ENCODE measurements at regions of chr5 and their contacts with region 1.

Region 1: GRCh38 chr5:68315679-68316271 is 100.2 kb downstream of the PIK3R1 start:
- DNase-seq: no peak

Region 2: DNA sequence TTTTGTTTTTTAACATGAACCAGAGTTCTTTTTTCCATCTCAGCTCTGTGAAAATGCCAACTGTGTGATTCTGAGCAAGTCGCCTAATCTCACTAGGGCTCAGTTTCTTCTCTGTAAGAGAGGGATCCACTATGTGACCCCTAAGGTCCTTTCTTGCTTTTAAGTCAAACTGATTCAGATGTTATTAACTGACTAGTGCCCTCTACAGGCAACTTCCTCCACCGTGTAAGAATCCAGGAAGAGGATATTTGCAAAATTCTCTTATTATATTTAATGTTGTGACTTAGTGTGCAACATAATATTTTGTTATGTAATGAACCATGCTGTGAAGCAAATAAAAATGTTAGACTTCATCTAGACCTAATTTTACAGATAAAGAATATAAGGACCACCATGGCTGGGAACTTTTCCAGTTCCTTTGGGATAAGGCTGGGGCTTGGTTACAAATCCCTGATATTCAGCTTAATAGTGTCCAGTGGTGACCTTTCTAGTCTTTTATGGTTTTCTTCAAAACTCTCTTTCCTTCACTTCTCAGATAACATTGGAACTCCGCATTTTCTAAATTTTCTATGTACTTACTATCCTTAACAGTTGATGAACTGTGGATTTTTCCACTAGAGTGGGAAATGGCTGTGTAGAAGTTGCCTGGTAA is 144.5 kb after region 1 on chr5:
- in situ Hi-C with region 1: loop called (anchors 25 kb)
- DNase-seq: peak; percentile 69

Measured in SK-MEL-5 (cell line).